B cell (primary cell): ENCODE measurements at regions of chr2 and their contacts with region 1.

Region 1: GRCh38 chr2:177164584-177165052 is 48.0 kb upstream of the HNRNPA3 start:
- DNase-seq: peak; percentile 86
- ATAC-seq: peak; percentile 66
- H3K4me3 ChIP-seq: peak overlapping the region; percentile 38 to 71 (median 50)
- H3K4me3 Mint-ChIP-seq: no peak overlapping the region
- H3K27ac ChIP-seq: peak overlapping the region; percentile 81 to 90
- H3K27ac Mint-ChIP-seq: no peak overlapping the region
- H3K4me1 ChIP-seq: peaks cover 19 to 25% of the 10 kb centered on the region in 2 donors
- H3K4me1 Mint-ChIP-seq: peaks cover 22% of the 10 kb centered on the region
- H3K27me3 ChIP-seq: no peaks in the 10 kb centered on the region
- H3K27me3 Mint-ChIP-seq: peaks cover 4% of the 10 kb centered on the region
- CTCF ChIP-seq: peak; percentile 100

Region 2: GRCh38 chr2:176126929-176127773 is 1037.5 kb before region 1 on chr2:
- CTCF ChIA-PET with region 1: interaction called, 21 read pairs
- POLR2A ChIA-PET with region 1: no interaction called
- intact Hi-C with region 1: loop called (anchors 5 kb)
- DNase-seq: peak; percentile 75
- ATAC-seq: no peak
- H3K4me3 ChIP-seq: no peak overlapping the region
- H3K4me3 Mint-ChIP-seq: no peak overlapping the region
- H3K27ac ChIP-seq: no peak overlapping the region
- H3K27ac Mint-ChIP-seq: no peak overlapping the region
- H3K4me1 ChIP-seq: peaks cover 24 to 50% of the 10 kb centered on the region in 2 donors
- H3K4me1 Mint-ChIP-seq: peaks cover 26% of the 10 kb centered on the region
- H3K27me3 ChIP-seq: peaks cover 0 to 84% (median 65%) of the 10 kb centered on the region in 4 experiments
- H3K27me3 Mint-ChIP-seq: peaks cover 71% of the 10 kb centered on the region
- CTCF ChIP-seq: peak; percentile 98

Region 3: GRCh38 chr2:177217247-177217843 is 52.7 kb after region 1 on chr2:
- CTCF ChIA-PET with region 1: interaction called, 41 read pairs
- POLR2A ChIA-PET with region 1: interaction called, 28 read pairs
- intact Hi-C with region 1: loop called (anchors 1 kb)
- DNase-seq: no peak
- ATAC-seq: no peak
- H3K4me3 ChIP-seq: no peak overlapping the region
- H3K4me3 Mint-ChIP-seq: no peak overlapping the region
- H3K27ac ChIP-seq: peak overlapping the region in 1 of 2 donors; percentile 42
- H3K27ac Mint-ChIP-seq: no peak overlapping the region
- H3K4me1 ChIP-seq: peaks cover 21 to 24% of the 10 kb centered on the region in 2 donors
- H3K4me1 Mint-ChIP-seq: peaks cover 42% of the 10 kb centered on the region
- H3K27me3 ChIP-seq: no peaks in the 10 kb centered on the region
- H3K27me3 Mint-ChIP-seq: no peaks in the 10 kb centered on the region
- CTCF ChIP-seq: no peak

Region 4: GRCh38 chr2:177281400-177282180 is 117.0 kb after region 1 on chr2:
- CTCF ChIA-PET with region 1: interaction called, 12 read pairs
- POLR2A ChIA-PET with region 1: no interaction called
- intact Hi-C with region 1: no loop called
- DNase-seq: peak; percentile 53
- ATAC-seq: peak; percentile 68
- H3K4me3 ChIP-seq: no peak overlapping the region
- H3K4me3 Mint-ChIP-seq: peak overlapping the region; percentile 40
- H3K27ac ChIP-seq: no peak overlapping the region
- H3K27ac Mint-ChIP-seq: peak overlapping the region; percentile 82
- H3K4me1 ChIP-seq: peaks cover 14 to 27% of the 10 kb centered on the region in 2 donors
- H3K4me1 Mint-ChIP-seq: peaks cover 34% of the 10 kb centered on the region
- H3K27me3 ChIP-seq: no peaks in the 10 kb centered on the region
- H3K27me3 Mint-ChIP-seq: no peaks in the 10 kb centered on the region
- CTCF ChIP-seq: no peak

Region 5: DNA sequence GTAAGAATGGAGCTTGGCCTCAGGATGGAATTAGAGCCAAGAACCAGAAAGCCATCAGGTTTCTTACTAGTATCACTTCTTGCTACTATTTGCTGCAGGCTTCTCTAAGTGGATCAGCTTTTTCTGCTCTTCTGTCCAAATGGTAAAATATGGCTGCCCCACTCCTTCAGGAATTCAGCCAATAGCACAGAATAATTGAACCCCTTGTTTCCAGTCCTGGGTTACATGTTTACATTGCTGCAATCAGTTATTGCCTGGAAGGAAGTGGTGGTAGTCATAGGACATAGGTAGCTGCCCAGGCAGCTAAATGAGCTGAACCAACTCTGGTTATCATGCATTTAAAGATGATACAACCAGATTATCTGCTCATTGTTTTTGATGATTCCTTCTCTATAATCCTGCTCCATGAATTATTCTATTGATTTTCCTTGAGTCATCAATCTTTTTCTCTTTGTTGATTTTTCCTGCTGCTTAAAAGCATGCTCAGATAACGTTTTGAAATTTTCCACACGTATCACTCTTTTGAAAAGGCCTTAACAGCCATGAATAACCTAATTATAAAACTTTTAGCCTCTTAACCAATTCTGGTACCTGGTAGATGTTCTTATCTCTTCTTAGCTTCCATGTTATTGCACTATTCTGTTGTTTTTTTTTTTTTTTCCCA is 240.5 kb after region 1 on chr2:
- CTCF ChIA-PET with region 1: interaction called, 15 read pairs
- POLR2A ChIA-PET with region 1: no interaction called
- intact Hi-C with region 1: no loop called
- DNase-seq: no peak
- ATAC-seq: no peak
- H3K4me3 ChIP-seq: no peak overlapping the region
- H3K4me3 Mint-ChIP-seq: no peak overlapping the region
- H3K27ac ChIP-seq: no peak overlapping the region
- H3K27ac Mint-ChIP-seq: no peak overlapping the region
- H3K4me1 ChIP-seq: no peaks in the 10 kb centered on the region
- H3K4me1 Mint-ChIP-seq: peaks cover 21% of the 10 kb centered on the region
- H3K27me3 ChIP-seq: no peaks in the 10 kb centered on the region
- H3K27me3 Mint-ChIP-seq: no peaks in the 10 kb centered on the region
- CTCF ChIP-seq: no peak

Region 6: GRCh38 chr2:177604271-177605065 is 439.9 kb after region 1 on chr2:
- CTCF ChIA-PET with region 1: interaction called, 11 read pairs
- POLR2A ChIA-PET with region 1: no interaction called
- intact Hi-C with region 1: no loop called
- DNase-seq: peak; percentile 34
- ATAC-seq: no peak
- H3K4me3 ChIP-seq: no peak overlapping the region
- H3K4me3 Mint-ChIP-seq: no peak overlapping the region
- H3K27ac ChIP-seq: no peak overlapping the region
- H3K27ac Mint-ChIP-seq: no peak overlapping the region
- H3K4me1 ChIP-seq: no peaks in the 10 kb centered on the region
- H3K4me1 Mint-ChIP-seq: no peaks in the 10 kb centered on the region
- H3K27me3 ChIP-seq: no peaks in the 10 kb centered on the region
- H3K27me3 Mint-ChIP-seq: peaks cover 7% of the 10 kb centered on the region
- CTCF ChIP-seq: peak; percentile 71

Region 7: GRCh38 chr2:177797808-177798207 is 633.2 kb after region 1 on chr2:
- CTCF ChIA-PET with region 1: no interaction called
- POLR2A ChIA-PET with region 1: no interaction called
- intact Hi-C with region 1: no loop called
- DNase-seq: no peak
- ATAC-seq: no peak
- H3K4me3 ChIP-seq: no peak overlapping the region
- H3K4me3 Mint-ChIP-seq: no peak overlapping the region
- H3K27ac ChIP-seq: no peak overlapping the region
- H3K27ac Mint-ChIP-seq: no peak overlapping the region
- H3K4me1 ChIP-seq: no peaks in the 10 kb centered on the region
- H3K4me1 Mint-ChIP-seq: no peaks in the 10 kb centered on the region
- H3K27me3 ChIP-seq: peaks cover 0 to 6% (median 2%) of the 10 kb centered on the region in 4 experiments
- H3K27me3 Mint-ChIP-seq: peaks cover 34% of the 10 kb centered on the region
- CTCF ChIP-seq: no peak